Uterus (tissue), 4 donors: ENCODE measurements at regions of chr1 and their contacts with region 1.

Region 1: GRCh38 chr1:227762233-227762911 is 27.1 kb downstream of the SNAP47 start:
- DNase-seq: peak; percentile 85 to 87
- H3K4me3 ChIP-seq: no peak overlapping the region
- H3K27ac ChIP-seq: peak overlapping the region; percentile 57 to 95
- H3K4me1 ChIP-seq: peaks cover 4 to 9% of the 10 kb centered on the region in 2 donors
- H3K27me3 ChIP-seq: no peaks in the 10 kb centered on the region
- CTCF ChIP-seq: peak; percentile 85 to 95 (median 91)
- POLR2A ChIP-seq: peak in 1 of 2 donors; percentile 24

Region 2: DNA sequence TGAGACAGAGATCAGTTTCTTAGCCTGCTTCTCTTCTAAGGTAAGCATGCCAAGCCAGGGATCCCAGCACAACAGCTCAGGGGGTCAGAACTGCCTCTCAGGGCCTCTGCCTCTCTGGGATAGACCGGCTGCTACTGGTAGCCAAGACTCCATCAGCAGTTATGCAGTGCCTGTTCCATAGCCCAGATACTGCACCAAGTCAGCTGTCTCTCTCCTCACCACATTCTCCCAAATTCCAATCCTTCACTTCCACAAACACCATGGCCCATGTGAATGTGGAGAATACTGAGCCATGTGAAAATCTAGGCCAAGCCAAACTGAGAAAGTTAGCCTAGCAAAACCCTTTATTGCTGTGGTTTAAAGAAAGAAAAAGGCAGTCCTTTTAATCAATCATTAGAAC is 481.5 kb before region 1 on chr1:
- intact Hi-C with region 1: no loop called
- DNase-seq: no peak
- H3K4me3 ChIP-seq: no peak overlapping the region
- H3K27ac ChIP-seq: no peak overlapping the region
- H3K4me1 ChIP-seq: no peaks in the 10 kb centered on the region
- H3K27me3 ChIP-seq: no peaks in the 10 kb centered on the region
- CTCF ChIP-seq: no peak
- POLR2A ChIP-seq: no peak

Region 3: DNA sequence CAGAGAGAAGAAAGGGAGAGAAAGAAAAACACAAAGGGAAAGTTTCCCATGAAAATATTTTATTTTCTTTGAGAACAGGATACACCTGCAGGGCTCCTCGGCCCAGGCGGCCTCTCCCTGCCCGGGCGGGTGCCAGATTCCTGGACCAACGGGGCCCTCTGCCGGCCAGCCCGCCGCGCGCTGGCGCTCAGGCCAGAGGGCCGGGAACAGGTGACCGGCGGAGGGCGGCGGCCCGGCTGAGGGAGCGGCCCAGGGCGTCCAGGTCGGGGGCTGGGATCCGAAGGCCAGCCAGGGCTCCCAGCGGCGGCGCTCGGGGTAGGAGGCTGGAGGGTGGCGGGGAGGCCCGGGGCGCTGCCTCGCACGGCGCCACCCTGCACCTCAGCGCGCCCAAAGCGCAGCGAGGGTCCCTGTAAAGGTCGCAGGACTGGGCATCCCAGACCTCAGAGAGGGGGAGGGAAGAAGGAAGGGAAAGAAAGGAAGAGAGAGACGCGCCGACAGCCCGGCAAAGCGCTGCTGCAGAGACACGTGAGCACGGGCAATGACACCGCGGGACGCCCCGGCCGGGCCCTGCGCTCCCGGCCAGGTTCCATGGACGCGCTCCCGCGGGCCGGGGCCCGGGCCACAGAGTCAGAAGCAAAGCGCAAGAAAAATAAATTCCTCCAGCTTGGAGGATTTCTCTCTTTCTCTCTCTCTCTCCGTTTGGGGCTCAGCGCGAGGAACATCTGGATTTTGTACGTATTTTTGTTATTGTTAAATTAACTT is 184.4 kb after region 1 on chr1:
- intact Hi-C with region 1: loop called (anchors 5 kb)
- DNase-seq: peak; percentile 72 to 80
- H3K4me3 ChIP-seq: peak overlapping the region; percentile 29 to 48
- H3K27ac ChIP-seq: peak overlapping the region; percentile 73 to 83
- H3K4me1 ChIP-seq: peaks cover 0 to 13% of the 10 kb centered on the region in 2 donors
- H3K27me3 ChIP-seq: no peaks in the 10 kb centered on the region
- CTCF ChIP-seq: peak; percentile 69 to 95 (median 86)
- POLR2A ChIP-seq: peak in 1 of 2 donors; percentile 2

Region 4: DNA sequence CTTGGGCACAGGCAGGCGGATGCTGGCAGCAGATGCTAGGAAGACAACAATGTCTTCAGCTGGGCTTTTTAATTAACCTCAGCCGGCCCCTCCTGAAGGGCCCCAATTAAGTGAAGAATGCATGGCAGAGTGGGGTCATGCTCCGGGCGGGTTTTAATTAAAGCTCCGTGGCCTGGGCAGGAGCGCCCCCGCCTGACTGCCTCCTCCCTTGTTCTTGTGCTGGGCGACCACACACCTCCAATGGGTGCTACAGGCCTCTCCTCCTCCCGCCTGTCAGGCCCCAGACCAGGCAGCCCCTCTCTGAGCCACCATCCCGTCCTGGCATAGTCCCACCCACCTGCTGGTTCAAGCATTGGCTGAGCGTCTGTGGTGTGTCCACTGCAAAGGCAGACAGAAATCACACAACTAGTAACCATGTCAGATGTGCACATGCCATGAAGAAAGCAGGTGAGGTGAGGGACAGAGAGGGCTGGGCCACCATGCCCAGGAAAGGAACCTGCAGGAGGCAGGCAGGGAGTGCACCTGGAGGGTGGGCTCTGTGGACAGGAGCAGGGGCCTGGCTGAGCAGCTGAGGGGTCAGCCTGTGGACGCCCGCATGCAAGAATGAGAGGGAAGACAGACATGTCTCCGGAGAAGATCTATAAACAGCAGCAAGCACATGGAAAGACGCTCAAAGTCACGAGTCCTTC is 311.6 kb after region 1 on chr1:
- intact Hi-C with region 1: loop called (anchors 10 kb)
- DNase-seq: peak in 1 of 2 donors; percentile 16
- H3K4me3 ChIP-seq: no peak overlapping the region
- H3K27ac ChIP-seq: no peak overlapping the region
- H3K4me1 ChIP-seq: no peaks in the 10 kb centered on the region
- H3K27me3 ChIP-seq: no peaks in the 10 kb centered on the region
- CTCF ChIP-seq: no peak
- POLR2A ChIP-seq: no peak